H1 (cell line): ENCODE measurements at regions of chr5 and their contacts with region 1.

Region 1: GRCh38 chr5:111615054-111615453 is 102.7 kb upstream of the STARD4 start:
- DNase-seq: no peak
- H3K4me3 ChIP-seq: no peak overlapping the region
- H3K27ac ChIP-seq: no peak overlapping the region
- H3K4me1 ChIP-seq: no peaks in the 10 kb centered on the region
- H3K27me3 ChIP-seq: no peaks in the 10 kb centered on the region
- CTCF ChIP-seq: no peak
- EP300 ChIP-seq: no peak
- POLR2A ChIP-seq: no peak
- RAD21 ChIP-seq: peak in 1 of 2 experiments; percentile 1; a peak in 1 of 4 replicates

Region 2: GRCh38 chr5:111628901-111629300 is 13.8 kb after region 1 on chr5:
- CTCF ChIA-PET with region 1: interaction called, 11 read pairs
- POLR2A ChIA-PET with region 1: no interaction called
- DNase-seq: no peak
- H3K4me3 ChIP-seq: no peak overlapping the region
- H3K27ac ChIP-seq: no peak overlapping the region
- H3K4me1 ChIP-seq: no peaks in the 10 kb centered on the region
- H3K27me3 ChIP-seq: no peaks in the 10 kb centered on the region
- CTCF ChIP-seq: no peak
- EP300 ChIP-seq: no peak
- POLR2A ChIP-seq: no peak
- RAD21 ChIP-seq: no peak

Region 3: DNA sequence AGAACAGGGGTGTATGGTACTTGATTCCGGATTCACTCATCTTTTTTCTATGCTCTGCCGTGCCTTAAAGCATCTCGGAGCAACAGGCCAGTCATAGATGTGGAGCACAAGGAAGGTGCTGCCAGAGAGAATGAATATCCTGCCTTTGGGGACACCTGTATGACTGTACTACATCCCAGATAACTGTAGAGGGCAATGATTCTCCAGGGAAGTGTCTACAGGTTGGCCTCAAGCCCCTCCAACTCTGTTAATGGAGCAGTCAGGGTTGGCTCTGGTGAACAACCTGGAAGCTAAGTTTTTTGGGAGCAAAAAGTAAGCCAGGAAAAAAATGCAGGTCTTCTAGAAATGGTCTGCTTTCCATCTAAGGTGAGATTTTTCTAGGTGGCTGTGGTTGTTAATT is 70.9 kb after region 1 on chr5:
- CTCF ChIA-PET with region 1: no interaction called
- POLR2A ChIA-PET with region 1: no interaction called
- DNase-seq: peak in 1 of 2 experiments; percentile 15
- H3K4me3 ChIP-seq: no peak overlapping the region
- H3K27ac ChIP-seq: no peak overlapping the region
- H3K4me1 ChIP-seq: peaks cover 0 to 2% (median 0%) of the 10 kb centered on the region in 4 experiments; a peak in 1 of 7 replicates
- H3K27me3 ChIP-seq: no peaks in the 10 kb centered on the region
- CTCF ChIP-seq: peak in 2 of 3 experiments; percentile 54 to 65; a peak in 3 of 4 replicates
- EP300 ChIP-seq: no peak
- POLR2A ChIP-seq: no peak
- RAD21 ChIP-seq: peak; percentile 83 to 89

Region 4: GRCh38 chr5:111834926-111835598 is 220.0 kb after region 1 on chr5:
- CTCF ChIA-PET with region 1: no interaction called
- POLR2A ChIA-PET with region 1: no interaction called
- DNase-seq: no peak
- H3K4me3 ChIP-seq: no peak overlapping the region
- H3K27ac ChIP-seq: no peak overlapping the region
- H3K4me1 ChIP-seq: no peaks in the 10 kb centered on the region
- H3K27me3 ChIP-seq: no peaks in the 10 kb centered on the region
- CTCF ChIP-seq: no peak; a peak in 1 of 4 replicates
- EP300 ChIP-seq: no peak
- POLR2A ChIP-seq: no peak
- RAD21 ChIP-seq: peak; percentile 45 to 62